ENCODE measurements at regions of chr7 and their contacts with region 1.

Region 1: GRCh38 chr7:50418086-50418515 is 32.0 kb downstream of the FIGNL1 start:
- DNase-seq: peak; percentile 43 to 85 (median 67)
- ATAC-seq: peak; percentile 97
- H3K4me3 ChIP-seq: no peak overlapping the region
- H3K4me3 Mint-ChIP-seq: no peak overlapping the region
- H3K27ac ChIP-seq: no peak overlapping the region
- H3K27ac Mint-ChIP-seq: no peak overlapping the region
- H3K4me1 ChIP-seq: peaks cover 20% of the 10 kb centered on the region
- H3K4me1 Mint-ChIP-seq: peaks cover 24% of the 10 kb centered on the region
- H3K27me3 ChIP-seq: no peaks in the 10 kb centered on the region
- H3K27me3 Mint-ChIP-seq: no peaks in the 10 kb centered on the region
- CTCF ChIP-seq: peak; percentile 73

Region 2: GRCh38 chr7:50142425-50143017 is 275.6 kb before region 1 on chr7:
- CTCF ChIA-PET with region 1: interaction called, 140 read pairs
- POLR2A ChIA-PET with region 1: no interaction called
- intact Hi-C with region 1: loop called (anchors 1 kb)
- DNase-seq: peak in 4 of 9 experiments; percentile 38 to 78 (median 59)
- ATAC-seq: peak; percentile 85
- H3K4me3 ChIP-seq: no peak overlapping the region
- H3K4me3 Mint-ChIP-seq: peak overlapping the region; percentile 57
- H3K27ac ChIP-seq: no peak overlapping the region
- H3K27ac Mint-ChIP-seq: peak overlapping the region; percentile 84
- H3K4me1 ChIP-seq: peaks cover 5% of the 10 kb centered on the region
- H3K4me1 Mint-ChIP-seq: peaks cover 15% of the 10 kb centered on the region
- H3K27me3 ChIP-seq: no peaks in the 10 kb centered on the region
- H3K27me3 Mint-ChIP-seq: no peaks in the 10 kb centered on the region
- CTCF ChIP-seq: peak; percentile 91

Region 3: GRCh38 chr7:50246551-50246950 is 171.6 kb before region 1 on chr7:
- CTCF ChIA-PET with region 1: no interaction called
- POLR2A ChIA-PET with region 1: no interaction called
- intact Hi-C with region 1: no loop called
- DNase-seq: no peak
- ATAC-seq: no peak
- H3K4me3 ChIP-seq: no peak overlapping the region
- H3K4me3 Mint-ChIP-seq: no peak overlapping the region
- H3K27ac ChIP-seq: no peak overlapping the region
- H3K27ac Mint-ChIP-seq: no peak overlapping the region
- H3K4me1 ChIP-seq: no peaks in the 10 kb centered on the region
- H3K4me1 Mint-ChIP-seq: peaks cover 8% of the 10 kb centered on the region
- H3K27me3 ChIP-seq: no peaks in the 10 kb centered on the region
- H3K27me3 Mint-ChIP-seq: no peaks in the 10 kb centered on the region
- CTCF ChIP-seq: no peak

Region 4: DNA sequence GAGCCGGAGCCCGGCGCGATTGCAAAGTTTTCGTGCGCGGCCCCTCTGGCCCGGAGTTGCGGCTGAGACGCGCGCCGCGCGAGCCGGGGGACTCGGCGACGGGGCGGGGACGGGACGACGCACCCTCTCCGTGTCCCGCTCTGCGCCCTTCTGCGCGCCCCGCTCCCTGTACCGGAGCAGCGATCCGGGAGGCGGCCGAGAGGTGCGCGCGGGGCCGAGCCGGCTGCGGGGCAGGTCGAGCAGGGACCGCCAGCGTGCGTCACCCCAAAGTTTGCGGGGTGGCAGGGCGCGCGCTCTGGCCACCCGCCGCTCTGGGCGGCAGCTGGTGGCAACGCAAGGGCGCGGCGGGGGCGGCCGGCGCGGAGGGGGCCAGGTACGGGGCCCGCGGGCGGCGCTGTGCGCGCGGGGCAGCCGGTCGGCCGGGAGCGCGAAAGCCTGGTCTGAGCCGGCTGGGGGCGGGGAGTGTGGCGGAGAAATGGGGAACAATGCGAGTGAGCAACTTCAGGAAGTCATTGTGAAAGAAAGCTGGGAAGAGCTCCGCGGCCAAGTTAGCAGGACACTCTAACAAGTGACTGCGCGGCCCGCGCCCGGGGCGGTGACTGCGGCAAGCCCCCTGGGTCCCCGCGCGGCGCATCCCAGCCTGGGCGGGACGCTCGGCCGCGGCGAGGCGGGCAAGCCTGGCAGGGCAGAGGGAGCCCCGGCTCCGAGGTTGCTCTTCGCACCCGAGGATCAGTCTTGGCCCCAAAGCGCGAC is 113.8 kb before region 1 on chr7 and contains the start of gene IKZF1:
- CTCF ChIA-PET with region 1: interaction called, 15 read pairs
- POLR2A ChIA-PET with region 1: interaction called, 3 read pairs
- intact Hi-C with region 1: loop called in 1 of 2 experiments (anchors 5 kb)
- DNase-seq: peak; percentile 32 to 82 (median 65)
- ATAC-seq: peak; percentile 39
- H3K4me3 ChIP-seq: peak within 1 kb of the TSS; percentile 90 to 96
- H3K4me3 Mint-ChIP-seq: peak within 1 kb of the TSS; percentile 93
- H3K27ac ChIP-seq: peak within 1 kb of the TSS; percentile 91 to 96
- H3K27ac Mint-ChIP-seq: peak within 1 kb of the TSS; percentile 96
- H3K4me1 ChIP-seq: peaks cover 51% of the 10 kb centered on the region
- H3K4me1 Mint-ChIP-seq: peaks cover 51% of the 10 kb centered on the region
- H3K27me3 ChIP-seq: no peaks in the 10 kb centered on the region
- H3K27me3 Mint-ChIP-seq: no peaks in the 10 kb centered on the region
- CTCF ChIP-seq: no peak
- total RNA-seq, gene IKZF1: 248 TPM

Region 5: DNA sequence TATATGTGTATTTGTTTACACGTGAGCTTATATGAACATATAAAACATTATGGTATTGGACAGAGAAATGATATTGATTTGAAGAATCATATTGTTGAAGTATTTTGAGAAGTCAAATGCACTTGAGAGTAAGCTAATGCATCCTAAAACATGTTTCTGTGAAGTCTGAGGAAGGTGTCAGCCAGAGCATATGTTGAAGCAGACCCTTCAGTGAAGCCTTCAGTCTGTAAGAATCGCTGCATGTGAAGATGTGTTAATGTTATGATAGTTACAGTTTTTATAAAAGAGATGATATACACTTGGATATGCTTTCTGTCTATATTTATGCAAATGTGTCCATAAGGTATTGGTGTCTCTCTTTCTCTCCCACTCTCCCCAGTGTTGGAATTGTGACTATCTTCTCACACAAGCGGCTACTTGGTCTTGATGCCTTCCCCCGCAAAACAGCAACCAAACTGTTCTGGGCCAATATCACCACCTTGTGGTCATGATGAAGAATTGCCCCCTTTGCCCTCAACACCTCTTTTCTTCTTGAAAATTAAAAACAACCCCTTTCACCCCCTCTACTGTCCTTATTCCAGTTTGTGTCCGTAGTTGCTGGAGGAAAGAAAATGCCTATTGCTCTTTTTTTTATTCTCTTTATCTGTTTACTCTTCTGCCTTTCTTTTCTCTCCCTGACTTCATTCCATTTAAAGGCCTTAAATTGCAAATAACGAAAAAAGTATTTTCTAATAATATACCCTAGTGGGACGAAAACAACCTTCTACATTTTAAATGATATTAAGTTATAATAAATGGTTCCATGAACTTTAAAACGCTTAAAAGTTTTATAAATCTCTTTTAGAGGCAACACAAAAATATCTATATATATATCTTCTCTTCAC is 48.7 kb before region 1 on chr7:
- CTCF ChIA-PET with region 1: interaction called, 91 read pairs
- POLR2A ChIA-PET with region 1: interaction called, 5 read pairs
- intact Hi-C with region 1: loop called in 1 of 2 experiments (anchors 1 kb)
- DNase-seq: peak in 4 of 9 experiments; percentile 55 to 92 (median 73)
- ATAC-seq: peak; percentile 58
- H3K4me3 ChIP-seq: no peak overlapping the region
- H3K4me3 Mint-ChIP-seq: peak overlapping the region; percentile 44
- H3K27ac ChIP-seq: peak overlapping the region in 1 of 2 experiments; percentile 67
- H3K27ac Mint-ChIP-seq: peak overlapping the region; percentile 99
- H3K4me1 ChIP-seq: peaks cover 95% of the 10 kb centered on the region
- H3K4me1 Mint-ChIP-seq: peaks cover 95% of the 10 kb centered on the region
- H3K27me3 ChIP-seq: no peaks in the 10 kb centered on the region
- H3K27me3 Mint-ChIP-seq: no peaks in the 10 kb centered on the region
- CTCF ChIP-seq: peak; percentile 92

Region 6: GRCh38 chr7:50397320-50397970 is 20.7 kb before region 1 on chr7:
- CTCF ChIA-PET with region 1: interaction called, 38 read pairs
- POLR2A ChIA-PET with region 1: no interaction called
- intact Hi-C with region 1: loop called in 1 of 2 experiments (anchors 1 kb)
- DNase-seq: peak in 3 of 9 experiments; percentile 33 to 84 (median 69)
- ATAC-seq: peak; percentile 19
- H3K4me3 ChIP-seq: no peak overlapping the region
- H3K4me3 Mint-ChIP-seq: peak overlapping the region; percentile 13
- H3K27ac ChIP-seq: peak overlapping the region in 1 of 2 experiments; percentile 80
- H3K27ac Mint-ChIP-seq: peak overlapping the region; percentile 95
- H3K4me1 ChIP-seq: peaks cover 64% of the 10 kb centered on the region
- H3K4me1 Mint-ChIP-seq: peaks cover 76% of the 10 kb centered on the region
- H3K27me3 ChIP-seq: no peaks in the 10 kb centered on the region
- H3K27me3 Mint-ChIP-seq: no peaks in the 10 kb centered on the region
- CTCF ChIP-seq: no peak

Region 7: DNA sequence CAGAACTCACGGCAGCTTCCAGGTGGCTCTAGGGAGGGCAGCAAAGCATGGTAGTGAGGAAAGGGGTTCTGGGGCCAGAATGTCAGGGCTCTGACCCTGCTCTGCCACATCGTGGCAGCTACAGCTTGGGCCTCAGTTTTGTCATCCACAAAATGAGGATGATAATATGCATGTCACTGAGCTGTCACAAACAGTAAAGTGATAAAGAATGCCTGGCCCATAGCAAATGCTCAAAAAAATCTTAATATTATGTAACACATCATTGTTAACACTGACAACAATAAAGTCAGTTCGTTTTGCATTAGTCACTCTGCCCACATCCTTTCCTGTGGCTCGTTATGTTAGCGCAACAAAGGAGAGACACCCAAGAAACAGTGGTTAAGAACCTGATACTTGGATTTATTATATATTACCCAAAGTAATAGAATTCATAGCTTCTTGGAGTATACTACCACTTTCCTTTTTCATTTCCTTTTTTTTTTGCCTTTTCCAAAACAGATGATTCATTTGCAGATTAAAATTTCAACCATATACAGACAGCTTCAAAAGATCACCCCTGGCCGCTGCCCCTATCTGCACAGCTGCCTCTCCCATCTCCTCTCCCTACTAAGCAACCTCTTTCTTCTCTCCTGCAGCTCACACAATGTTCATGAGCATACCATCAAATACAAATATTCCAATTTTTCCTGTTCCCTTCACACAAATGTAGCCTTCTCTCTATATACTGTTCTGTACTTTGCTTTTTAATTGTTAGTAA is 192.6 kb after region 1 on chr7:
- CTCF ChIA-PET with region 1: no interaction called
- POLR2A ChIA-PET with region 1: no interaction called
- intact Hi-C with region 1: no loop called
- DNase-seq: peak; percentile 17 to 81 (median 60)
- ATAC-seq: peak; percentile 84
- H3K4me3 ChIP-seq: no peak overlapping the region
- H3K4me3 Mint-ChIP-seq: peak overlapping the region; percentile 21
- H3K27ac ChIP-seq: peak overlapping the region; percentile 39 to 53
- H3K27ac Mint-ChIP-seq: peak overlapping the region; percentile 68
- H3K4me1 ChIP-seq: peaks cover 18% of the 10 kb centered on the region
- H3K4me1 Mint-ChIP-seq: peaks cover 39% of the 10 kb centered on the region
- H3K27me3 ChIP-seq: no peaks in the 10 kb centered on the region
- H3K27me3 Mint-ChIP-seq: no peaks in the 10 kb centered on the region
- CTCF ChIP-seq: no peak